ENCODE measurements at regions of chr3 and their contacts with region 1.

Region 1: GRCh38 chr3:123328851-123329635 is 119.8 kb downstream of the ADCY5 start:
- DNase-seq: no peak
- H3K4me3 ChIP-seq: no peak overlapping the region
- CTCF ChIP-seq: peak; percentile 94

Region 2: GRCh38 chr3:123341871-123342642 is 13.0 kb after region 1 on chr3:
- CTCF ChIA-PET with region 1: interaction called, 11 read pairs
- POLR2A ChIA-PET with region 1: no interaction called
- DNase-seq: no peak
- H3K4me3 ChIP-seq: no peak overlapping the region
- CTCF ChIP-seq: no peak

Region 3: GRCh38 chr3:123353852-123354238 is 24.8 kb after region 1 on chr3:
- CTCF ChIA-PET with region 1: no interaction called
- POLR2A ChIA-PET with region 1: no interaction called
- DNase-seq: no peak
- H3K4me3 ChIP-seq: no peak overlapping the region
- CTCF ChIP-seq: no peak

Region 4: GRCh38 chr3:123489400-123490004 is 160.5 kb after region 1 on chr3:
- CTCF ChIA-PET with region 1: interaction called, 80 read pairs
- POLR2A ChIA-PET with region 1: no interaction called
- DNase-seq: no peak
- H3K4me3 ChIP-seq: no peak overlapping the region
- CTCF ChIP-seq: peak; percentile 92

Region 5: GRCh38 chr3:123552095-123552714 is 223.2 kb after region 1 on chr3:
- CTCF ChIA-PET with region 1: interaction called, 250 read pairs
- POLR2A ChIA-PET with region 1: no interaction called
- DNase-seq: no peak
- H3K4me3 ChIP-seq: no peak overlapping the region
- CTCF ChIP-seq: peak; percentile 53